GM12878 (cell line): ENCODE measurements at regions of chr17 and their contacts with region 1.

Region 1: GRCh38 chr17:7862692-7863437 is 5.1 kb downstream of the CYB5D1 start:
- DNase-seq: no peak
- ATAC-seq: no peak
- H3K4me3 ChIP-seq: no peak overlapping the region
- H3K27ac ChIP-seq: no peak overlapping the region
- H3K4me1 ChIP-seq: peaks cover 4% of the 10 kb centered on the region
- H3K27me3 ChIP-seq: no peaks in the 10 kb centered on the region
- CTCF ChIP-seq: peak; percentile 64 to 73 (median 67)
- EP300 ChIP-seq: no peak
- POLR2A ChIP-seq: no peak
- RAD21 ChIP-seq: peak; percentile 93

Region 2: DNA sequence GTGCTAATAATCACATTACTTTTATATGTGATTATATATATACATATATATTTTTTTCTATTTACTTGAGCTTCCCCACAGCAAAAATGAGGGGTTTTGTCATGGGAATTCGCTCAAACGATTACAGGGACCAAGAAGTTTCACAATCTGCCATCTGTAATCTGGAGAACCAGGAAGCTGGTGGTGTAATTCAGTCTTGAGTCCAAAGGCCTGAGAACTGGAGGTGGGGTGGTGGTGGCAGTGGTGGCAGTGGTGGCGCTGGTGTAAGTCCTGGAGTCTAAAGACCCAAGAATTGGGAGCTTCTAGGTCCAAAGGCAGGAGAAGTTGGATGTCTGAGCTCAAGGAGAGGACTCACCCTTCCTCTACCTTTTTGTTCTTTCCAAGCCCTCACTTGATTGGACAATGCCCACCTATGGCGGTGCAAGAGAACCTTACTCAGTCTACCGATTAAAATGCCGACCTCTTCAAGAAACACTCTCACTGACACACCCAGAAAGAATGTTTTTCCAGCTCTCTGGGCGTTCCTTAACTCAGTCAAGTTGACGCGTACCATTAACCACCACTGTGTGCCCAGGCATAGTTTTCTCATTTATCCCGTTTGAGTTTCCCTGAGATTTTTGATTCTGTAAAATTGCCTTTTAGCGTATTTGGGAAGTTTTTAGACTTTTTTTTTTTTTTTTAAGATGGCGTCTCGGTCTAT is 346.8 kb before region 1 on chr17:
- CTCF ChIA-PET with region 1: no interaction called
- POLR2A ChIA-PET with region 1: no interaction called
- RAD21 ChIA-PET with region 1: no interaction called
- SMC1A ChIA-PET with region 1: no interaction called
- in situ Hi-C with region 1: no loop called
- intact Hi-C with region 1: no loop called
- DNase-seq: no peak
- ATAC-seq: no peak
- H3K4me3 ChIP-seq: no peak overlapping the region
- H3K27ac ChIP-seq: no peak overlapping the region
- H3K4me1 ChIP-seq: no peaks in the 10 kb centered on the region
- H3K27me3 ChIP-seq: no peaks in the 10 kb centered on the region
- CTCF ChIP-seq: no peak
- EP300 ChIP-seq: no peak
- POLR2A ChIP-seq: no peak
- RAD21 ChIP-seq: no peak

Region 3: DNA sequence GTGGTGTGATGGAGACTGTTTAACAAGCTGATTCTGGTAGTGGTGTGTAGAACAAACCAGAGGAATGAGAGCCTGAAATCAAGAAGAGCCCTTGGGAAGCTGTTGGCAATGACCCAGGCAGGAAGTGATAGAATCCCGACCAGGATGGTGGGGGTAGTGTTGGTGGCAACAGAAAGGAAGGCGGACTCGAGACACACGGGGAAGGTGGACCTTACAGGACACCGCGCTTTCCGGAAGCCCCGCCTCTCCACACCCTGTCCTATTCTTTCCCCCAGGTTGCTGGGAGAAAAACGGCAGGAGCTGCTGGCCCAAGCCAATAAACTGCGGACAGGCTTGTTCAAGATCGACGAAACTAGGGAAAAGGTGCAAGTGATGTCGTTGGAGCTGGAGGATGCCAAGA is 58.9 kb before region 1 on chr17:
- CTCF ChIA-PET with region 1: no interaction called
- POLR2A ChIA-PET with region 1: no interaction called
- RAD21 ChIA-PET with region 1: no interaction called
- SMC1A ChIA-PET with region 1: no interaction called
- in situ Hi-C with region 1: no loop called
- intact Hi-C with region 1: no loop called
- DNase-seq: no peak
- ATAC-seq: no peak
- H3K4me3 ChIP-seq: no peak overlapping the region
- H3K27ac ChIP-seq: no peak overlapping the region
- H3K4me1 ChIP-seq: no peaks in the 10 kb centered on the region
- H3K27me3 ChIP-seq: no peaks in the 10 kb centered on the region
- CTCF ChIP-seq: no peak
- EP300 ChIP-seq: no peak
- POLR2A ChIP-seq: no peak
- RAD21 ChIP-seq: no peak

Region 4: GRCh38 chr17:7873051-7873450 is 10.2 kb after region 1 on chr17:
- CTCF ChIA-PET with region 1: interaction called, 75 read pairs
- POLR2A ChIA-PET with region 1: no interaction called
- RAD21 ChIA-PET with region 1: interaction called, 6 read pairs
- SMC1A ChIA-PET with region 1: interaction called, 13 read pairs
- in situ Hi-C with region 1: no loop called
- intact Hi-C with region 1: no loop called
- DNase-seq: no peak
- ATAC-seq: peak; percentile 58; the same call in 2 of the 3 replicates
- H3K4me3 ChIP-seq: no peak overlapping the region
- H3K27ac ChIP-seq: no peak overlapping the region; the same call in 1 of the 2 replicates
- H3K4me1 ChIP-seq: 0 out of 2 replicates have a peak, but pooled peaks cover 8% of the 10 kb centered on the region
- H3K27me3 ChIP-seq: no peaks in the 10 kb centered on the region
- CTCF ChIP-seq: no peak
- EP300 ChIP-seq: no peak
- POLR2A ChIP-seq: no peak
- RAD21 ChIP-seq: no peak

Region 5: DNA sequence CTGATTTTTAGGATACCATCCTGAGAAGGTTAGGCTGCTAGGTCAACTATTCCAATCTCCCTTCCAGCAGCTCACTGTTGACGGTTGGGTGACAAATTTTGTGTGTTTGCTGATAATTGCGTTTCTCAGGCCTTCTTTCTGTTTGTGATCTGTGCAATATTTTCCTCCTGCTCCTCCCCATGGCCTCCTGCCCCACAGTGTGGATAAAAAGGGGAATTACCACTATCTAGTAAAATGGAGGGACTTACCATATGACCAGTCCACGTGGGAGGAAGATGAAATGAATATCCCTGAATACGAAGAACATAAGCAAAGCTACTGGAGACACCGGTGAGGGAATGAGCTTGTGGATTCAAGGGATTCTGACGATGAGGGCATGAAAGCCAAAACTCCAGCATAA is 34.9 kb after region 1 on chr17:
- CTCF ChIA-PET with region 1: interaction called, 19 read pairs
- POLR2A ChIA-PET with region 1: no interaction called
- RAD21 ChIA-PET with region 1: no interaction called
- SMC1A ChIA-PET with region 1: interaction called, 12 read pairs
- in situ Hi-C with region 1: no loop called
- intact Hi-C with region 1: loop called (anchors 5 kb)
- DNase-seq: no peak
- ATAC-seq: peak; percentile 35; the same call in 1 of the 3 replicates
- H3K4me3 ChIP-seq: no peak overlapping the region
- H3K27ac ChIP-seq: no peak overlapping the region
- H3K4me1 ChIP-seq: no peaks in the 10 kb centered on the region
- H3K27me3 ChIP-seq: no peaks in the 10 kb centered on the region
- CTCF ChIP-seq: peak in 2 of 3 experiments; percentile 31 to 34; a peak in 5 of 6 replicates
- EP300 ChIP-seq: no peak
- POLR2A ChIP-seq: no peak
- RAD21 ChIP-seq: peak; percentile 54

Region 6: GRCh38 chr17:7915611-7916382 is 52.9 kb after region 1 on chr17 and contains the start of gene RNF227:
- CTCF ChIA-PET with region 1: interaction called, 42 read pairs
- POLR2A ChIA-PET with region 1: interaction called, 6 read pairs
- RAD21 ChIA-PET with region 1: interaction called, 5 read pairs
- SMC1A ChIA-PET with region 1: interaction called, 11 read pairs
- in situ Hi-C with region 1: no loop called
- intact Hi-C with region 1: no loop called
- DNase-seq: peak; percentile 57
- ATAC-seq: peak; percentile 87
- H3K4me3 ChIP-seq: peak within 1 kb of the TSS; percentile 76
- H3K27ac ChIP-seq: peak within 1 kb of the TSS; percentile 34
- H3K4me1 ChIP-seq: peaks cover 10% of the 10 kb centered on the region
- H3K27me3 ChIP-seq: no peaks in the 10 kb centered on the region
- CTCF ChIP-seq: 0 out of 6 replicates have a peak, but pooled peaks of 1 of the 3 experiments have one; percentile 6
- EP300 ChIP-seq: no peak
- POLR2A ChIP-seq: peak; percentile 71
- RAD21 ChIP-seq: no peak
- polyA plus RNA-seq, gene RNF227: 0.49 to 0.87 TPM

Region 7: DNA sequence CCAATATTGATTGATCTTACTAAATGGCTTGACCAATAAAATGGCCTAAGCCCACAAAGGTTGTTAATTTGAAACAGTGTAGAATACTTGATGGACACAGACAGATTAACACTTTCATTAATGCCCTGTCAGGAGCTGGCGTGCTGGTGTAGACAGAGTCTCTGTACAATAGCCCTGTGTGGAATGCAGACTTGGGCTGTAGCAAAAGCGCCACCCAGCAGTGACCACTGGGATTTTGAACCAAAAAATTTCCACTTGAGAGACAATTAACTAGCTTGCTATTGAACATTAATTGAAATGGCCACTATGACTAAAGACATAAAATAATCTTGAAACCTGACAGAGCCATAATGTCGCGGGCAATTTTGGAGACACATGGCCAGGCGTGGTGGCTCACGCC is 119.8 kb after region 1 on chr17:
- CTCF ChIA-PET with region 1: interaction called, 308 read pairs
- POLR2A ChIA-PET with region 1: interaction called, 6 read pairs
- RAD21 ChIA-PET with region 1: interaction called, 65 read pairs
- SMC1A ChIA-PET with region 1: interaction called, 41 read pairs
- in situ Hi-C with region 1: loop called (anchors 5 kb)
- intact Hi-C with region 1: no loop called
- DNase-seq: no peak
- ATAC-seq: no peak
- H3K4me3 ChIP-seq: no peak overlapping the region
- H3K27ac ChIP-seq: no peak overlapping the region
- H3K4me1 ChIP-seq: no peaks in the 10 kb centered on the region
- H3K27me3 ChIP-seq: peaks cover 0 to 5% of the 10 kb centered on the region in 2 experiments; a peak in 1 of 4 replicates
- CTCF ChIP-seq: peak in 2 of 3 experiments; percentile 9 to 40; a peak in 2 of 6 replicates
- EP300 ChIP-seq: no peak
- POLR2A ChIP-seq: no peak
- RAD21 ChIP-seq: peak; percentile 41; the same call in 1 of the 2 replicates